Posterior cingulate gyrus (tissue), 11 donors: ENCODE measurements at regions of chr17 and their contacts with region 1.

Region 1: GRCh38 chr17:77331301-77331864 is 190.6 kb downstream of the SEC14L1 start:
- DNase-seq: peak; percentile 75 to 98 (median 92)

Region 2: DNA sequence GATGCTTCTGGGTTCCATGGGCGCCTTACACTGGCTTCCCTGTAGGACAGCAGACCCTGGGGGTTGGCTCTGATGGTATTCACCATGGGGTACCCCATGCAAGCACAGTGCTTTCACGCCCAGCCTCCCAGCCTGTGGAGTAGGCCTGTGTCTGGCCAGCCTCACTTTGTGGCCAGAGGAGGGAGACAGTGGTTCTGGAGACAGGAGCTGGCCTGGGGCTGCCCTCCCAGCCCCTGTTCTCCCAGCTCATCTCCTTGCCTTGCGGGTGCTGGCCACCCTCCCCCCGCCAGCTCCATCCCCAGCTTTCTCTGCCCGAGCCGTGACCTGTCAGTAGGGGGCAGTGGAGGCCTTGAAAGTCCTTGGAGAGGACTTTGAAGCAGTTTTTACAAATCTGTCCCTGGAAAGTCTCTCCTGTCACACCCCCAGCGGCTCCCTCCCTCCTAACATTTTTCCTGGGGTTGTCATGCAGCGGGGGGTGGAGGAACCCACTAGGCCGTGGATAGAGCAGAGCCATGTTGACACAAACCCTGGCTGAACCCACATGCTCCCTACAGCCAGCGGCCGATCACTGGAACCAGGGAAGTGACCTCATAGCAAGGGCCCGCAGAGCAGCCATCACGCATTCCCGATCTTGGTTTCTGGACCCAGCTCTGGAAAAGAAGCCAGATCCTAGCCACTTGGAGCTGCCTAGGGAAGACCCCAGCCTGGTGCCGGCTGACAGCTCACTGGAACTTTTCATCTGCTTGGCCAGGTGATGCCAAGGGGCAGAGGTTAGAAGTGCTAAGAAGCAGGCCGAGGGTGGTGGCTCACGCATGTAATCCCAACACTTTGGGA is 98.8 kb after region 1 on chr17:
- intact Hi-C with region 1: loop called (anchors 1 kb)
- DNase-seq: peak; percentile 57 to 97 (median 84)

Region 3: DNA sequence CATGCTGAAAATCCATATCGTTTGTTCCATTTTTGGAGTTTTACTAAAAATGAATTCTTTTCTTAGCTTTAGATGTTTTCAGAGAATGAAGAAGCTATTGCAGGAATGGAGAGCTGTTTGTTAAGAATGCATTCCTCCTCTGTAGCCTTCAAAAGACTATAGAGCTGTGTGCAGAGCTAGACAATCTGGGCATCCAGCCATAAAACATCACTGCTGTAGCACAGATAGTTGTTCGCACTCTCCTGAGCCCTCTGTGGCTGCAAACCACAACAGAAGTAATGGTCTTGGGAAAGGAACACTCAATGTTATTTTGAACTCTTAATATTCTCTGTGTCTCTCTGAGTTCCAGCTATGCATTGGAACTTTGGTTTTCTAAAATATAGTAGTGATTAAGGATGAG is 632.1 kb after region 1 on chr17:
- intact Hi-C with region 1: no loop called
- DNase-seq: peak in 6 of 10 donors; percentile 47 to 85 (median 50)